Posterior cingulate gyrus (tissue), 11 donors: ENCODE measurements at regions of chr12 and their contacts with region 1.

Region 1: DNA sequence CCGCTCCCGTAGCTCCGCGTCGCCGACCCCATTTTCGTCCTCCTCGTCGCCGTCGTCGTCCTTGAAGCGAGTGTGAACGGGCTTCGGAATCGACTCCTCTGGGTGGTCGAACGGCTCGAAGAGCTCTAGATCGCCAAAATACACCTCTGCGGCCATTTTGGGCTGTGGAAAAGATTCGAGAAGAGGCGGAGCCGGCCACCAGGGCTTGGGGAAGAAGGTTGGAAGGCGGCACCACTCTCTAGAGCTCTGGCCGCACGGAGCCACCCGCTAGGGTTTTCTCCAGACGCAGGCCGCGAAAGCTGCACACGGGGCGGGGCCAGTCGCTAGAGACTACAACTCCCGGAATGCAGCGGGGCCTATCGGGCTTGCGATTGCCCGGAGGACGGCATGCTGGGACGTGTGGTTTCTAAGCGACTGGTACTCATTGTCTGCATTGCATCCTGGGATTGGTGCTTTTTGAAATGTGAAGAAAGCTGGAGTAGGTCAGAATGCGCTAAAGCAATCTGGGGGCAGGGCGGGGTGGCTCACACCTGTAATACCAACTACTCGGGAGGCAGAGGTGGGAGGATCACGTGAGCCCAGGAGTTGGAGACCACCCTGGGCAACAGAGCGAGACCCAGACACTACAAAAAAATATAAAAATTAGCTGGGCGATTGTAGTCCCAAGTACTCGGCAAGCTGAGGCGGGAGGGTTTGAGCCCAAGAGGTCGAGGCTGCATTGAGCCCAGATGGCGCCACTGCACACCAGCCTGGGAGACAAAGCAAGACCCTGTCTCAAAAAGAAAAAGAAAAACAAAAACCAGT is at the start of gene ZCCHC8:
- DNase-seq: peak; percentile 93 to 99 (median 97)

Region 2: GRCh38 chr12:122421821-122422729 is 78.8 kb before region 1 on chr12 and contains the start of gene CLIP1:
- intact Hi-C with region 1: loop called (anchors 2 kb)
- DNase-seq: peak; percentile 26 to 92 (median 51)

Region 3: GRCh38 chr12:122526683-122527477 is 26.0 kb after region 1 on chr12 and contains the starts of genes KNTC1 and RSRC2:
- intact Hi-C with region 1: loop called (anchors 1 kb)
- DNase-seq: peak; percentile 95 to 100 (median 98)